ENCODE measurements at regions of chr21 and their contacts with region 1.

Region 1: GRCh38 chr21:34073032-34073869 is at the starts of genes MRPS6 and SLC5A3:
- DNase-seq: peak; percentile 95
- total RNA-seq, gene MRPS6: 45.8 to 64.0 TPM
- total RNA-seq, gene SLC5A3: 10.9 to 16.4 TPM

Region 2: DNA sequence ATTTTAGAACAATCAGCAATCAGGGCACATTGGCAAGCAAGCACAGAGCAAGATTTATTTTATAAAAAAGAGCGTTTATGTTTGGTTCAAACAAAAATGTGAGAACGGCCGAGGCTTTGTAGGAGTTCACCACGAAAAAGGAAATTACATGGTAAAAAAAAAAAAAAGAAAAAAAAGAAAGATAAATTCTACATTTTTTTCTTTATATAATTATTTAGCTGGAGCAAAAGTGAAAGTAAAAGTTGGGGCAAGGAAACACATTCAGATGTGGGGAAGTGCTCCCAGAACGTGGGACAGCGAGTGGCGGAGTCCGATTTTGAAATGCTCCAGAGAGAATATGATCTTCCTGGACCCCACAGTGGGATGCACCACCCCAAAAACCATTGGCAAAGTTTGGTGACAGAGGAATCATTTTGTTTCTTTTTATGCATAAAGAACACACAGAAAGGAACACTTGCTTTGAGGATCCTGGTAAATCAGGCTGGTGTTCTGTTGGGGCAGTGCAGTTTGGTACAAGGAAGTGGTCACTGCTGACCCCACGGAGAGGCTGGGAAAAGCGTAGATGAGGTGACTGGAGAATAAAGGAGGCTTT is 141.4 kb before region 1 on chr21:
- intact Hi-C with region 1: loop called in 1 of 2 experiments (anchors 10 kb)
- DNase-seq: no peak

Region 3: DNA sequence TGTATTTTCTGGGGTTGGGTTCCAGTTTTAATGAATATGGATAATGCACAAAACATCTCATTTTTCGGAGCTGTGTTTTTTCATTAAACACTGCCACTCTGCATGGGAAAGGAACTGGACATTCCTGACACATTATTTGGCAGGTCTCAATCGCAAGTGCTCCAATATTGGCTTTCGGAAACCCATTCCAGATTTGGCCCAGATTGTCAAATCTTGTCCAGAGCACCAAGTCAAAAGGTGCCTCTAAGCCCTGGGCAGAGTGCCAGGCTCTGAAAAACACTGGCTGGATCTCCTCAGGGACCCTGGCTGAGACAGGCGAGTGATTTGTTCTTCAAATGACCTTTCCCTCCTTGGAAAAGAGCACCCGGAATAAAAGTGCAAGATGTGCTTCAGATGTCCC is 68.3 kb before region 1 on chr21:
- intact Hi-C with region 1: no loop called
- DNase-seq: no peak

Region 4: GRCh38 chr21:34113842-34114241 is 40.6 kb after region 1 on chr21:
- intact Hi-C with region 1: loop called in 1 of 2 experiments (anchors 1 kb)
- DNase-seq: no peak

Region 5: DNA sequence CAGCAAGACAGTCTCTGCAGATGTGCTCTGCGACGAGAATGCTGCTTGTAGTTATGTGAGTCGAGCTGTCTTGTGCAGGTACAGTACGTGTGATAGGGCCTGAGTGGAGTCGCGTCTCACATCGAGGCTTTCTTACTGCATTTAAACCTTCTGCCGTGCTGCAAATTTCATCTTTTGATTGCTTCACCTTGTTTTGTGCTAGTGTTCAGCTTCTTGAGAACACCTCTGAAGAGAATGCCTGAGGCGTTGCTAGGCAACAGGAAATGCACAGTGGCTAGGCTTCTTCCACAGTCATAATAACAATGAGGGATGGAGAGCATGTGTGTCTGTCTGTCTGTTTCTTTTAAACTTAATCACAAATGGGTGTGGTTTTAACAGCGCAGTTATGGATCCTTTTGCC is 53.0 kb after region 1 on chr21:
- intact Hi-C with region 1: no loop called
- DNase-seq: no peak

Region 6: GRCh38 chr21:34187935-34188334 is 114.7 kb after region 1 on chr21:
- intact Hi-C with region 1: loop called in 1 of 2 experiments (anchors 10 kb)
- DNase-seq: peak; percentile 92

Measured in posterior vena cava (tissue), 2 donors.